A673 (cell line): ENCODE measurements at regions of chr15 and their contacts with region 1.

Region 1: DNA sequence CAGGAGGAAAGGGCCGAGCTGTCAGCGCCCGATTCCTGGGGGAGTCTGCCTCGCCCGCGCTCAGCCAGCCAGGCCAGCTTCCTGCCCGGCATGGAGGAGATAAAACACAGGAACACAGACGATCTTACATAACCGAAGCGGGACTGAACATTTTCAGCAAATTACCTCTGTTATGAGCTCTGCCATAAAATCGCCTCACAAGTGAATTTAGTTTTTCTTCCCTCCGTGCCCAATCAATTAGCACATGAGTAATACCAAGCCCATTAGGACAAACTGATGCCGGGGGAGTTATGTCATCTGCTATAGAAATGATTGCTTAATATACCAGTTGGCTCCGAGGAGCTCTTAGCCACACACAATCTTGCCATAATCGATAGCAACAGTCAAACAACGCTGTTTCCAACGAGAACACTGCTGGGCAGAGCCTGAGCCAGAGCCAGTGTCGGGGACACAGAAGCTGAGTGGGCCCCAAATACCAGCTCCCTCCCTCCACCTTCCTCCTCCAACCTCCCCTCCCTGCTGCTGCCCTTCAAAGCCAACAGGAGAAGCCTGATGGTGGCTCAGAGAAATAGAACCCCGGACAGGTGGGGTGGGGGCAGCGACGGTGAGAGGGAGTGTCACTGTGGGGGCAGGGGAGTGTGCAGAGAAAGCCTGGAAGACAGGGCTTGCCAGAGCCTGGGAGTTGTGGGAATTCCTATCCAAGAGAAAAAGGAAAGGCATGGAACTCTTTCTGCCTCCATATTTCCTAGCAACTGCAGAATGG is 279.4 kb upstream of the TLE3 start:
- DNase-seq: peak; percentile 84
- H3K4me3 ChIP-seq: peak overlapping the region; percentile 4
- H3K27ac ChIP-seq: peak overlapping the region; percentile 35
- H3K4me1 ChIP-seq: peaks cover 23% of the 10 kb centered on the region
- H3K27me3 ChIP-seq: no peaks in the 10 kb centered on the region
- CTCF ChIP-seq: no peak

Region 2: GRCh38 chr15:70180186-70180880 is 196.8 kb before region 1 on chr15:
- CTCF ChIA-PET with region 1: interaction called, 13 read pairs
- POLR2A ChIA-PET with region 1: no interaction called
- intact Hi-C with region 1: no loop called
- DNase-seq: no peak
- H3K4me3 ChIP-seq: no peak overlapping the region
- H3K27ac ChIP-seq: no peak overlapping the region
- H3K4me1 ChIP-seq: peaks cover 28% of the 10 kb centered on the region
- H3K27me3 ChIP-seq: no peaks in the 10 kb centered on the region
- CTCF ChIP-seq: no peak

Region 3: GRCh38 chr15:70222606-70223005 is 154.5 kb before region 1 on chr15:
- CTCF ChIA-PET with region 1: interaction called, 11 read pairs
- POLR2A ChIA-PET with region 1: no interaction called
- intact Hi-C with region 1: no loop called
- DNase-seq: no peak
- H3K4me3 ChIP-seq: no peak overlapping the region
- H3K27ac ChIP-seq: no peak overlapping the region
- H3K4me1 ChIP-seq: peaks cover 5% of the 10 kb centered on the region
- H3K27me3 ChIP-seq: no peaks in the 10 kb centered on the region
- CTCF ChIP-seq: no peak

Region 4: DNA sequence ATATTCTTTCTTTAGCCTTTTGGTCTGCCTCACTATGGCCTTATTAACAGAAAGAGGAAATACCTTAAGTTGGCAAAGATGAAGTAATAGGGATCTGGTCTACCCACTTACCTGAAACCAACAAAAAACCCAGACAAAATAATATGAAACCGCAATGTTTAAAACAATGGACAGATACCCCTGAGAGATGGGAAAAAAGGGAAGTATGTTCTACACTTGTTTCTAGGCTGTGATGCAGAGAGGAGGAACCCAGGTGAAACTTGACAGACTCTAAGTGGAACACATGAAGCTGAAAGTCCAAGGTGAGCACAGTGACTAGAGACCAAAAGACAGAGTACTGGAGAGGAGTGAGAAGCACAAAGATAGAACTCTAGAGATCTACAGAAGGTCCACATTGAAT is 1511.7 kb after region 1 on chr15:
- CTCF ChIA-PET with region 1: no interaction called
- POLR2A ChIA-PET with region 1: no interaction called
- intact Hi-C with region 1: no loop called
- DNase-seq: no peak
- H3K4me3 ChIP-seq: no peak overlapping the region
- H3K27ac ChIP-seq: no peak overlapping the region
- H3K4me1 ChIP-seq: no peaks in the 10 kb centered on the region
- H3K27me3 ChIP-seq: no peaks in the 10 kb centered on the region
- CTCF ChIP-seq: no peak